Naive thymus-derived CD4-positive, alpha-beta T cell (primary cell): ENCODE measurements at regions of chr11 and their contacts with region 1.

Region 1: GRCh38 chr11:65569973-65570918 is at the start of gene ZNRD2:
- DNase-seq: peak; percentile 94 to 99 (median 98)
- ATAC-seq: peak; percentile 82
- H3K4me3 ChIP-seq: peak within 1 kb of the TSS; percentile 96
- H3K4me3 Mint-ChIP-seq: peak within 1 kb of the TSS; percentile 91 to 100 (median 97)
- H3K27ac ChIP-seq: peak within 1 kb of the TSS; percentile 96
- H3K27ac Mint-ChIP-seq: peak within 1 kb of the TSS; percentile 89 to 100 (median 99)
- H3K4me1 ChIP-seq: peaks cover 63 to 64% of the 10 kb centered on the region in 2 donors
- H3K4me1 Mint-ChIP-seq: peaks cover 49 to 77% (median 69%) of the 10 kb centered on the region in 7 donors
- H3K27me3 ChIP-seq: no peaks in the 10 kb centered on the region
- H3K27me3 Mint-ChIP-seq: no peaks in the 10 kb centered on the region
- total RNA-seq, gene ZNRD2: 29.1 to 40.9 (median 32.9) TPM

Region 2: GRCh38 chr11:65027213-65028067 is 542.8 kb before region 1 on chr11 and contains the start of gene SNX15:
- CTCF ChIA-PET with region 1: no interaction called
- POLR2A ChIA-PET with region 1: no interaction called
- intact Hi-C with region 1: loop called (anchors 2 to 5 kb)
- DNase-seq: peak; percentile 61 to 95 (median 94)
- ATAC-seq: peak; percentile 97
- H3K4me3 ChIP-seq: peak within 1 kb of the TSS; percentile 41
- H3K4me3 Mint-ChIP-seq: peak within 1 kb of the TSS; percentile 66 to 91 (median 83)
- H3K27ac ChIP-seq: peak within 1 kb of the TSS; percentile 59
- H3K27ac Mint-ChIP-seq: peak within 1 kb of the TSS; percentile 59 to 95 (median 87)
- H3K4me1 ChIP-seq: peaks cover 9 to 14% of the 10 kb centered on the region in 2 donors
- H3K4me1 Mint-ChIP-seq: peaks cover 12 to 24% (median 21%) of the 10 kb centered on the region in 7 donors
- H3K27me3 ChIP-seq: no peaks in the 10 kb centered on the region
- H3K27me3 Mint-ChIP-seq: no peaks in the 10 kb centered on the region
- total RNA-seq, gene SNX15: 13.1 to 29.0 (median 21.7) TPM

Region 3: DNA sequence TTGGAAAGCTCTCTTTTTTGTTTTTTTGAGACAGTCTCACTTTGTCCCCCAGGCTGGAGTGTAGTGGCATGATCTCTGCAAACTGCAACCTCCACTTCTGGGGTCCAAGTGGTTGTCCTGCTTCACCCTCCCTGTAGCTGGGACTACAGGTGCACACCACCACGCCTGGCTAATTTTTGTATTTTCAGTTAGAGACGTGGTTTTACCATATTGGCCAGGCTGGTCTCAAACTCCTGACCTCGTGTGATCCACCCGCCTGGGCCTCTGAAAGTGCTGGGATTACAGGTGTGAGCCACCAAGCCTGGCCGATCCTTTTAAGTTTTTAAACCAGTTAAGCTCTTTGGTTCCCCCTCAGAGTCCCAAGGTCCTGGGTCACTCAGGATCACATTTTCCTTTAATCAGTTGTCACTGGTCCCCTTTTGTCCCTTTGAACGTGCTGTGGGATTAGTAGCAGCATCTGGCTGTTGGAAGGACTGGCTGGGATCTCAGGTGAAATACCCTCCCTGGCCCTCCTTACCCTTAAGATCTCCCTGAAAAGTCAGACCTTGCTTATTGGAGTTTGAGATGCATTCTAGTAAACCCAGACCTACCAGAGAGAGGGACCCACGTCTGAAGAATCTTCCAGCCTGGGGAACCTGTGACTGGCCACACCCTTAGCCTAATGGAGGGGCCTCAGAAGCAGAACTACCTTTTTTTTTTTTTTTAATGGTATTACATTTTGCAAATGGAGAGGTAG is 63.3 kb before region 1 on chr11:
- CTCF ChIA-PET with region 1: no interaction called
- POLR2A ChIA-PET with region 1: interaction called, 11 read pairs
- intact Hi-C with region 1: no loop called
- DNase-seq: peak in 7 of 9 donors; percentile 40 to 65 (median 58)
- ATAC-seq: peak; percentile 57
- H3K4me3 ChIP-seq: peak overlapping the region; percentile 99
- H3K4me3 Mint-ChIP-seq: no peak overlapping the region
- H3K27ac ChIP-seq: peak overlapping the region; percentile 99
- H3K27ac Mint-ChIP-seq: peak overlapping the region in 8 of 9 donors; percentile 78 to 92 (median 88)
- H3K4me1 ChIP-seq: peaks cover 35 to 38% of the 10 kb centered on the region in 2 donors
- H3K4me1 Mint-ChIP-seq: peaks cover 46 to 56% (median 49%) of the 10 kb centered on the region in 7 donors
- H3K27me3 ChIP-seq: no peaks in the 10 kb centered on the region
- H3K27me3 Mint-ChIP-seq: peaks cover 0 to 4% (median 0%) of the 10 kb centered on the region in 5 donors

Region 4: GRCh38 chr11:65546217-65546958 is 23.9 kb before region 1 on chr11:
- CTCF ChIA-PET with region 1: interaction called, 57 read pairs
- POLR2A ChIA-PET with region 1: interaction called, 186 read pairs
- intact Hi-C with region 1: loop called (anchors 1 kb)
- DNase-seq: peak; percentile 95 to 100 (median 98)
- ATAC-seq: peak; percentile 96
- H3K4me3 ChIP-seq: peak overlapping the region; percentile 14
- H3K4me3 Mint-ChIP-seq: peak overlapping the region; percentile 39 to 86 (median 84)
- H3K27ac ChIP-seq: peak overlapping the region; percentile 75
- H3K27ac Mint-ChIP-seq: peak overlapping the region; percentile 86 to 98 (median 88)
- H3K4me1 ChIP-seq: peaks cover 27 to 41% of the 10 kb centered on the region in 2 donors
- H3K4me1 Mint-ChIP-seq: peaks cover 40 to 73% (median 54%) of the 10 kb centered on the region in 7 donors
- H3K27me3 ChIP-seq: no peaks in the 10 kb centered on the region
- H3K27me3 Mint-ChIP-seq: no peaks in the 10 kb centered on the region

Region 5: DNA sequence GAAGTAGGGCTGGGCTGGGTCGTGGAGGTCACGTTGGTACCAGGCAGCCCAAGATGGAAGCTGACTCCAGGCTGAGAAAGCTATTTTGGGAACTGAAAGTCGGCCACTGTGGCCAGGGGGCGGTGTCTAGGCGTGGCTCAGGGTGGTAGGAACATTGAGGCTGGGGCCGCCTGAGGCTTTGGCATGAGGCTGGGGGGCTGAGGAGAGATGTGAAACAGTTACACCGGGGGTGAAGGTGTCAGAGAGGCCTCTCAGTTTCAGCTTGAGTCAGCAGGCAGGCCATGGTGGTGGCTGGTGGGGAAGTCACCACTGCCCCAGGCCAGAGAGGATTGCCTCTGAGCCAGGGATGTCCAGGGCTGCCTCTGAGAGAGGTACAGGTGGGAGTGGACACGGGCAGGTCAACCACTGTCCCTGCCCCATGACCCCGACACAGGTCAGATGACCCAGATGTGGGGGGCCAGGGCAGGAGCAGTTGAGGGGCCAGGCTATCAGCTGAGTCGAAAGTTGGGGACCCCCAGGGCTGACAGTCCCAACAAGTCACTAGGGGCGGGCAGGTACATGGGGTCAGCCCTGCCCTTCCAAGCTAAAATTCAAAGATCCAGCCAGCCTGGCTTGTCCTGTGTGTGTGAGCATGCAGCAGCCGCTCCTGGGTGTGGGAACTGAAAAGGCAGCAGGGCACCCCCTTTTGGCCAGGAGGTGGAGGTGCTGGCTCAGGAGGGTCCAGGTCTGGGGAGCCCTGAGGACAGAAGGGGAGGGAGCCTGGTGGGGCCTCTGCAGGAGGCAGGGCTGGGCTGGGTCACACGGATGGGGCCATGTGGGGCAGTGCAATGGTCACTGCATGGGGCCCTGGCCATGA is 18.2 kb after region 1 on chr11:
- CTCF ChIA-PET with region 1: interaction called, 36 read pairs
- POLR2A ChIA-PET with region 1: interaction called, 61 read pairs
- intact Hi-C with region 1: loop called (anchors 1 kb)
- DNase-seq: peak; percentile 35 to 83 (median 75)
- ATAC-seq: peak; percentile 91
- H3K4me3 ChIP-seq: no peak overlapping the region
- H3K4me3 Mint-ChIP-seq: peak overlapping the region in 1 of 10 donors; percentile 76
- H3K27ac ChIP-seq: peak overlapping the region; percentile 43
- H3K27ac Mint-ChIP-seq: peak overlapping the region; percentile 38 to 86 (median 76)
- H3K4me1 ChIP-seq: peaks cover 11 to 16% of the 10 kb centered on the region in 2 donors
- H3K4me1 Mint-ChIP-seq: peaks cover 16 to 43% (median 21%) of the 10 kb centered on the region in 7 donors
- H3K27me3 ChIP-seq: no peaks in the 10 kb centered on the region
- H3K27me3 Mint-ChIP-seq: no peaks in the 10 kb centered on the region

Region 6: DNA sequence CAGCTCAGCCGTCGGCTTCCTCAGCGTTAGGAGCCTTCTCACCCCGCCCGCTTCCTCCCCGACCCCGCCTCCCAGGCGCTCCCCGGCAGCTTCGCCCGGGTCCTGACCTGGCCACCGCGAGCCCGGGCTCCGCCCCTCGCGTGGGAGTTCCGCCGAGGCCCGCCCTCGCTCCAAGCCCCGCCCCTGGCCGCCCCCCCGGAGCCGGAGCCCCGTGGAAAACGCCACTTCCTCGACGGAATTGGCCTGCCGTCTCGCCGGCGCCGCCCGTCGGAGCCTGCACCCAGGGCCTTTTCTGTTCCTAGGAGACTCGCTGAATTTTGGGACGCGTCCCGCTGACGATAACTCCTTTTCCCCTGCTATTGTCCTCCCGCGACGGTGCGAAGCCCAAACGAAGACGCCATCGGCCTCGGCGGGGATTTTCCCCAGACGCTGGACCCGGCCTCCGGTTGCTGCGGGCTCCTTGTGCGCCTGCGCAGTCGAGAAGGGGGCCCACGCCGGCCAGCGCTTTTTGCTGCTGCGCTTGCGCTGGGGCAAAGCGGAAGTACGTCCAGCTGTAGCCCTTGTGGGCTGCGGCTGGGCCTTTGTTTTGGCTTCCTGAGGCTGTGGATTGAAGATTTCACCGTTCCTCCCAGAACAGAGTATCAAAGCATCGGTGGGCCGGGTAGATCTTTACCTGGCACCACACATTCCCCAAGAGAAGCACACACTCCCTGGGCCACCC is 82.4 kb after region 1 on chr11:
- CTCF ChIA-PET with region 1: no interaction called
- POLR2A ChIA-PET with region 1: interaction called, 5 read pairs
- intact Hi-C with region 1: loop called (anchors 2 kb)
- DNase-seq: peak; percentile 91 to 99 (median 95)
- ATAC-seq: peak; percentile 92
- H3K4me3 ChIP-seq: peak overlapping the region; percentile 58
- H3K4me3 Mint-ChIP-seq: peak overlapping the region; percentile 70 to 95 (median 90)
- H3K27ac ChIP-seq: peak overlapping the region; percentile 98
- H3K27ac Mint-ChIP-seq: peak overlapping the region; percentile 90 to 99 (median 98)
- H3K4me1 ChIP-seq: peaks cover 25% of the 10 kb centered on the region in 2 donors
- H3K4me1 Mint-ChIP-seq: peaks cover 36 to 59% (median 51%) of the 10 kb centered on the region in 7 donors
- H3K27me3 ChIP-seq: no peaks in the 10 kb centered on the region
- H3K27me3 Mint-ChIP-seq: no peaks in the 10 kb centered on the region

Region 7: DNA sequence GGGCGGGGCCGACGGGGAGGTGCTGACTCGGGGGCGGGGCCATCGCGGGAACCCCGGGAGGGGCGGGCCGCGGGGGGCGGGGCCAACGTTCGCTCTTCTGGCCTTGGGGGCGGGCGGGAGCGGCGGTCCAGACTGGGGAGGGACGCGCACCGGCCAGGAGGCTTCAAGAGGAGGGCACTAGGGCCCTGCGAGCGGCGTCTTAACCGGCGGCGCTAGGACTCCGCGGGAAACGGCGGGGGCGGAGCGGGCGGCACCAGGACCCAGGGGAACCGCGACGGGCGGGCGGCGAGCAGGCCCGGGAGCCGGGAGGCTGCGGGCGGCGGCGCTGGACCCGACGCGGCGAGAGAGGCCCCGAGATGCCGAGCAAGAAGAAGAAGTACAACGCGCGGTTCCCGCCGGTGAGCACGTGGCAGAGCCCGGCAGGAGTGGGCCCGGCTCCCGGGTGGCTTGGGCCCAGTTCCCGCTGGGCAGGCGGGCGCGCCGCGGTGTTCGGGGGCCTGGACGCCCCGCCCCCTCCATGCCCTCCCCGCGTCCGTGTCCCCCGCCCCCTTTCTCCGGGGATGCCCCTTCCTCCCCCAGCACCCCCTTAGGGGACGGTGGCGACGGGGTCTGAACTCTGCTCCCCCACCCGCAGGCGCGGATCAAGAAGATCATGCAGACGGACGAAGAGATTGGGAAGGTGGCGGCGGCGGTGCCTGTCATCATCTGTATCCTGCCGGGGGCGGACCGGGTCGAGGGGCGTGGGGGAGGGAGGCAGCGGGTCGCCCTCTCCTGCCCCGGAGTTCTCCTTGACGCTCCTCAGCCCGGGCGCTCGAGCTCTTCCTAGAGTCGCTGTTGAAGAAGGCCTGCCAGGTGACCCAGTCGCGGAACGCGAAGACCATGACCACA is 349.1 kb after region 1 on chr11 and contains the start of gene DRAP1:
- CTCF ChIA-PET with region 1: no interaction called
- POLR2A ChIA-PET with region 1: no interaction called
- intact Hi-C with region 1: loop called in 1 of 2 experiments (anchors 1 kb)
- DNase-seq: peak; percentile 95 to 98 (median 97)
- ATAC-seq: peak; percentile 93
- H3K4me3 ChIP-seq: peak within 1 kb of the TSS; percentile 83
- H3K4me3 Mint-ChIP-seq: peak within 1 kb of the TSS; percentile 86 to 96 (median 93)
- H3K27ac ChIP-seq: peak within 1 kb of the TSS; percentile 95
- H3K27ac Mint-ChIP-seq: peak within 1 kb of the TSS; percentile 79 to 96 (median 90)
- H3K4me1 ChIP-seq: peaks cover 26 to 28% of the 10 kb centered on the region in 2 donors
- H3K4me1 Mint-ChIP-seq: peaks cover 32 to 61% (median 36%) of the 10 kb centered on the region in 7 donors
- H3K27me3 ChIP-seq: no peaks in the 10 kb centered on the region
- H3K27me3 Mint-ChIP-seq: no peaks in the 10 kb centered on the region
- total RNA-seq, gene DRAP1: 72.6 to 166 (median 81.9) TPM